Esophagus muscularis mucosa (tissue), 4 donors: ENCODE measurements at regions of chr22 and their contacts with region 1.

Region 1: DNA sequence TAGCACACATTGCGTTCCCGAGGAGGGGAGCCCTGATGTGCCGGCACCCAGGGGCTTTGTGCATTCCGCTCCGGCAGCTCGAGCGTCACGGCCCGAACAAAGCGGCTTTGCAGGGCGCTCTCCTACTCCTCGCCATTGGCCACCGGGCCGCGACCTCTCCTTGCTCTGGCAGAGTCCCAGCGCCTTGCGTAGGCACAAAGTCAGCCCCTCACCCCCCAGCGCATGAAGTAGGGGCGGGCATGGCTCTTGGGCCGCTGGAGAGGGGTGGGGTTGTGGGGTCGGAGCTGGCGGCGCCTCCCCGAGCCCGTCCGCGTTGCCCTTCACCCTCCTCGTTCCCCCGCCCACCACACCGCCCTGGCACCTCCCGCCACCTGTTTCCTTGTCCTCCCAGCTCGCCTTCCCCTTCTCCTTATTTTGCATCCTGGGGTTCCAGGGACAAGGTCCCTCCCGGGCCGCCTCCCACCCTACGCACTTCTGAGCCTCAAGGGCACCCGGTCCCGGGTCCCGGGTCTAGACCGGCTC is 753 bp upstream of the PPARA start:
- DNase-seq: no peak
- H3K4me3 ChIP-seq: peak overlapping the region; percentile 89 to 96 (median 92)
- H3K27ac ChIP-seq: peak overlapping the region; percentile 90 to 94 (median 92)
- H3K4me1 ChIP-seq: peaks cover 30 to 42% (median 32%) of the 10 kb centered on the region in 4 donors
- H3K27me3 ChIP-seq: no peaks in the 10 kb centered on the region
- CTCF ChIP-seq: no peak
- EP300 ChIP-seq: no peak
- POLR2A ChIP-seq: no peak

Region 2: DNA sequence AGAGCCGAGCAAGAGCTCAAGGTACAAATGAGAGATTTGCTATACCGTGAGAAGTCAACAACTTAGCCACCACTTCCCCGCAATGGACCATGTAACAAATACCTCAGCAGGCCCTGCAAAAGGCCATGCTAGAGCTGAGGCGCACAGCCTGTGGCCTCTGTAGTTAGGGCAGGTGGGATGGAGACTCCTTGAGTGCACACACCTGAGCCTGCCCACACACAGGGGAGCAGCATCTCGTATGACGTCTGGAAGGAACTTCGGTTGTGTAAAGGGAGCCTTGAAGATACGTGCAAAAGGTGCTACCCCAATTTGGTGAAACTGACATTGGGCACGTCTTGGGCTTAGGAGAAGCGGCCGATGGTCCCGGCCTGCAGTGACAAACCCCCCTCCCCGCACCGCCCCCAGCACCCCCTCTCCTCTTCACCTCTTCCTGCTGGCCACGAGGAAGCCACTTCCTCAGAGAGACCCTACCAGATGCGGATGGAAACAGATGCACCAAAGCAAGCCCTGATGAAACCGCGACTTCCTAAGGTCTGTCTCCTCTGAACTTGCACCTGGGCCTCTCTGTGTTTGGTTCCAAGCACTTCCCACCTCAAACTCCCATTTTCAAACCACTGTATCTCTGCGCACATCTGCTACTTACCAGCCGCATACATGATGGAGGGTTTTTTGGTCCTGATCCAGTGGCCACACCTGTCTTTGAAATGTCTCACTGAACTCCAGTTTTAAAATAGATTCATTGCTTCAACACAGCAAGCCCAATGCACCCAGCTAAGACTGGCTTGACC is 89.9 kb after region 1 on chr22:
- intact Hi-C with region 1: loop called (anchors 5 kb)
- DNase-seq: no peak
- H3K4me3 ChIP-seq: no peak overlapping the region
- H3K27ac ChIP-seq: peak overlapping the region; percentile 63 to 73 (median 68)
- H3K4me1 ChIP-seq: peaks cover 23 to 32% (median 28%) of the 10 kb centered on the region in 4 donors
- H3K27me3 ChIP-seq: no peaks in the 10 kb centered on the region
- CTCF ChIP-seq: no peak
- EP300 ChIP-seq: no peak
- POLR2A ChIP-seq: no peak

Region 3: GRCh38 chr22:46267431-46268279 is 118.1 kb after region 1 on chr22 and contains the start of gene TTC38:
- intact Hi-C with region 1: loop called (anchors 10 kb)
- DNase-seq: peak; percentile 97
- H3K4me3 ChIP-seq: peak within 1 kb of the TSS; percentile 66 to 89 (median 79)
- H3K27ac ChIP-seq: peak within 1 kb of the TSS; percentile 83 to 87 (median 84)
- H3K4me1 ChIP-seq: peaks cover 30 to 47% (median 36%) of the 10 kb centered on the region in 4 donors
- H3K27me3 ChIP-seq: no peaks in the 10 kb centered on the region
- CTCF ChIP-seq: no peak
- EP300 ChIP-seq: no peak
- POLR2A ChIP-seq: no peak
- total RNA-seq, gene TTC38: 28.4 to 58.6 (median 32.3) TPM

Region 4: DNA sequence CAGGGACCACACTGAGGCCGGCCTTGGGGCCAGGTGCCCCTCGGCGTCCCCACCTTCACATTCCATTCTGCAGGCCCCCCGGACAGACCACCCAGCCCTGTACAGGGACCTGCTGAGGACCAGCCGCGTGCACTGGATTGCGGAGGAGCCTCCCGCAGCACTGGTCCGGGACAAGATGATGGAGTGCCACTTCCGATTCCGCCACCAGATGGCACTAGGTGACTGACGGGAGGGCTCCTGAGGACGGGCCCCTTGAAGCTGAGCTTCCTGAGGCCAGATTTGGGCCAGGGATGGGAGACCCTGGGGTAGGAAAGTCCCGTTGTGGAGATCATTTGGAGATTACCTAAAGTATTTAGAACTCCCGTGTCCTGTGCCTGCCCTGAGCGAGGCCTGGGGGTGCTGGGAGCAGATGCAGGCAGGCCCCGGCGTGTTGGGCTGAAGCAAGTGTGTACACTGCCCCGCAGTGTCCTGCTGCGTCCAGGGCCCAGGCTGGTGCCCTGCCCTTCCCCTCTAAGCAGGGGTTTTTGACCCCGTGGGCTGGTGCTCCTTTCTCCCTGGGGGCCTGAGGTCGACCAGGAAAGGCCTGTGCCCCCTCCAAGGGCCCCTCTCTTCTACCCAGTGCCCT is 205.9 kb after region 1 on chr22:
- intact Hi-C with region 1: no loop called
- DNase-seq: no peak
- H3K4me3 ChIP-seq: no peak overlapping the region
- H3K27ac ChIP-seq: no peak overlapping the region
- H3K4me1 ChIP-seq: peaks cover 0 to 23% (median 6%) of the 10 kb centered on the region in 4 donors
- H3K27me3 ChIP-seq: no peaks in the 10 kb centered on the region
- CTCF ChIP-seq: peak; percentile 55 to 75 (median 58)
- EP300 ChIP-seq: no peak
- POLR2A ChIP-seq: no peak